Activated CD8-positive, alpha-beta T cell treated with anti-CD3 and anti-CD28 coated beads, Interleukin-2, amount 10 ng/mL, durations not matched to agents 7 days and 5 days (primary cell): ENCODE measurements at regions of chr3 and their contacts with region 1.

Region 1: GRCh38 chr3:32334675-32335074 is 57.0 kb upstream of the CMTM7 start:
- DNase-seq: peak; percentile 56
- ATAC-seq: peak; percentile 60
- H3K4me3 Mint-ChIP-seq: no peak overlapping the region
- H3K27ac Mint-ChIP-seq: no peak overlapping the region
- H3K4me1 Mint-ChIP-seq: peaks cover 18% of the 10 kb centered on the region
- H3K27me3 Mint-ChIP-seq: no peaks in the 10 kb centered on the region

Region 2: GRCh38 chr3:32302601-32303398 is 31.9 kb before region 1 on chr3:
- CTCF ChIA-PET with region 1: interaction called, 68 read pairs
- POLR2A ChIA-PET with region 1: interaction called, 10 read pairs
- DNase-seq: no peak
- ATAC-seq: no peak
- H3K4me3 Mint-ChIP-seq: peak overlapping the region; percentile 41
- H3K27ac Mint-ChIP-seq: peak overlapping the region; percentile 84
- H3K4me1 Mint-ChIP-seq: peaks cover 24% of the 10 kb centered on the region
- H3K27me3 Mint-ChIP-seq: no peaks in the 10 kb centered on the region

Region 3: GRCh38 chr3:32313723-32314473 is 20.8 kb before region 1 on chr3:
- CTCF ChIA-PET with region 1: interaction called, 15 read pairs
- POLR2A ChIA-PET with region 1: no interaction called
- DNase-seq: peak; percentile 28
- ATAC-seq: peak; percentile 68
- H3K4me3 Mint-ChIP-seq: no peak overlapping the region
- H3K27ac Mint-ChIP-seq: peak overlapping the region; percentile 62
- H3K4me1 Mint-ChIP-seq: peaks cover 14% of the 10 kb centered on the region
- H3K27me3 Mint-ChIP-seq: peaks cover 3% of the 10 kb centered on the region